HepG2 (cell line): ENCODE measurements at regions of chr4 and their contacts with region 1.

Region 1: DNA sequence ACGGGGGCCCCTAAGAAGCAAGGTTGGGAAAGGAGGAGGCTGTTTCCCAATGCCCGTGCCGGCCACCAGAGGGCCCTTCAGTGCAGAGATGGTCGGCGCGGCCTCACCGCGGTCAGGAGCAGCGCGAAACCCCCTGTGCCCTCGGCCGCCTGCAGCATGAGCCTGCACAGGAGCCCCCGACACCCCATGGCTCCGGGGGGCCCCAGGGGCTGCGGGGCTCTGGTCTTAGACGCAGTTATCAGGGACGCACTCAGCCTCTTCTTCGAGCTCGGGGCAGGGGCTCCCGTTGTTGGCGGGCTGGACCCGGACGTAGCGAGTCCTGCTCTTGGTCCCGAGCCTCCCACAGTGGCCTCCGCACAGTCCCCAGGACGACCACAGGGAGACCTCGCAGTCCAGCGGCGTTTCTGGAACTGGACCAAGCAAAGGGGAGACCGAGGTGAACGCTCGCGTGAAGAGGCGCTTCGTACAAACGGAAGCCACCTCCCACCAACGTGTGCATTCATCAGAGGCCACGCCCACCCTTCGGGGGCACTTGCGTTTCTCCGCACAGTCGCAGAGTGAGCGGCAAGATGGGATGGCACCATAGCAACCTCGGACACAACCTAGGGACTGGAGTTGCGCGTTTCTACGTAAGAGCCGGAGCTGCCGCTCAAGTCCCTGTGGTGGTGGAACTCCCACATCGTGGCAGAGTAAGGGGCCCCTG is 5.0 kb downstream of the SPON2 start:
- DNase-seq: peak; percentile 24
- ATAC-seq: peak; percentile 79
- H3K4me3 ChIP-seq: no peak overlapping the region
- H3K27ac ChIP-seq: no peak overlapping the region
- H3K4me1 ChIP-seq: peaks cover 11% of the 10 kb centered on the region; the same call in 1 of the 2 replicates
- H3K27me3 ChIP-seq: peaks cover 3 to 6% of the 10 kb centered on the region in 2 experiments; a peak in 3 of 5 replicates
- CTCF ChIP-seq: peak; percentile 89
- EP300 ChIP-seq: no peak
- POLR2A ChIP-seq: no peak
- RAD21 ChIP-seq: peak; percentile 80

Region 2: GRCh38 chr4:1092026-1092982 is 75.1 kb before region 1 on chr4:
- CTCF ChIA-PET with region 1: no interaction called
- POLR2A ChIA-PET with region 1: no interaction called
- in situ Hi-C with region 1: no loop called
- intact Hi-C with region 1: no loop called
- DNase-seq: no peak
- ATAC-seq: peak; percentile 75
- H3K4me3 ChIP-seq: no peak overlapping the region
- H3K27ac ChIP-seq: no peak overlapping the region
- H3K4me1 ChIP-seq: no peaks in the 10 kb centered on the region
- H3K27me3 ChIP-seq: peaks cover 7 to 31% of the 10 kb centered on the region in 2 experiments; a peak in 4 of 5 replicates
- CTCF ChIP-seq: peak; percentile 24; the same call in 1 of the 2 replicates
- EP300 ChIP-seq: no peak
- POLR2A ChIP-seq: no peak
- RAD21 ChIP-seq: no peak

Region 3: DNA sequence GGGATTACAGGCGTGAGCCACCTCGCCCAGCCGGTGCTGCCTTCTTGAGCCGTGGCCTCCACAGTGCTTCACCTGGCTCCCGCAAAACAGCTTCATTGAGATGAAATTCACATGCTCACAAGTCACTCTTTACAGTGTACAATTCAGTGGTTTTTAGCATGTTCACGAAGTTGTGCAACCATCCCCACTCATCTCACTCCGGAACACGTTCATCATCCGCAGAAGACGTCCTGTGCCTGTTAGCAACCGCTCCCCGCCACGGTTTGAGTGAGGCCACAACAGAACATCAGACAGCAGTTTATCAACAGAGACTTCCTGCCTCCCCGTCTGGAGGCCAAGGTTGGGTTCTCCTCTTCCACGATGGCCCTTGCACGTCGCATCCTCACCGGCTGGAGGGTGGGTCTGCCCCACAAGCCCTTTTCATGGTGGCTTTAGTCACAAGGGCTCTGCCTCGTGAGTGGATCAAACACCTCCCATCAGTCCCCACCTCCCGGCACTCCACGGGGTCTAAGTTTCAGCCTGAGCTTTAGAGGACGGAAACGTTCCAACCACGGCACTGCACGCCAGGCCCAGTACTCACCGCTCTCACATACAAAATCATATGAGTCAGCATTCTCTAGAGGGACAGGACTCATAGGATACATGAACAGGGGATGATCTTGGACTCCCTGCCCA is 34.6 kb after region 1 on chr4:
- CTCF ChIA-PET with region 1: no interaction called
- POLR2A ChIA-PET with region 1: interaction called, 95 read pairs
- in situ Hi-C with region 1: loop called (anchors 5 kb)
- intact Hi-C with region 1: no loop called
- DNase-seq: no peak
- ATAC-seq: no peak
- H3K4me3 ChIP-seq: no peak overlapping the region
- H3K27ac ChIP-seq: no peak overlapping the region
- H3K4me1 ChIP-seq: peaks cover 35% of the 10 kb centered on the region
- H3K27me3 ChIP-seq: no peaks in the 10 kb centered on the region
- CTCF ChIP-seq: no peak
- EP300 ChIP-seq: no peak
- POLR2A ChIP-seq: no peak
- RAD21 ChIP-seq: no peak

Region 4: DNA sequence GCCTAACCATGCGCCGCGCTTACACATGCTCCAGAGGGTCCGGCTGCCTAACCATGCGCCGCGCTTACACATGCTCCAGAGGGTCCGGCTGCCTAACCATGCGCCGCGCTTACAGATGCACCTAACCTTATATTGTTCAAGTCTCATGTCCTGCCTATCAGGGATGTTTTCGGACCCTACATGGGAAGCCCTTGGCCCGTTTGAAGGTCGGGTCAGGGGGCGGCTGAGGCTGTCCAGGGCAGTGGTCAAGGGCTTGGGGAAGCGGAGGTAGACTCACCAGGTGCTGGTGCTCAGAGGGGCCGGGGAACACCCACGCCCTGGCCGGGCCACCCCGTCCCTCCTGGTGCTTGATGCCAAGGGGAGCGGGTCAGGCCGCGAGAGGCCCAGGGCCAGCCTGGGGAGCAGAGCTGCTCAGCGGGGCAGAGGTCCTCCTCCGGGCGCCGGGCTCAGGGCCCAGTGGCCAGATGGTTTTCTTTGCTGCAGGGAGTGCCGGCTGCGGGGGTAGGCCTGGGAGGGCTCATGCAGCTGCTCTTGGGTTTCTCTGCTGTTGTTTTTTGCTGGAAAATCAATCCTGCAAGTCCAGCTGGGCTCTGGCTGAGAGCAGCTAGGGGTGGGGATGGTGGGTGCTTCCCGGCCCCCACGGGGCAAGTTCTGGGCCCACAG is 40.3 kb after region 1 on chr4:
- CTCF ChIA-PET with region 1: no interaction called
- POLR2A ChIA-PET with region 1: interaction called, 95 read pairs
- in situ Hi-C with region 1: loop called (anchors 5 kb)
- intact Hi-C with region 1: no loop called
- DNase-seq: no peak
- ATAC-seq: peak; percentile 10
- H3K4me3 ChIP-seq: no peak overlapping the region
- H3K27ac ChIP-seq: no peak overlapping the region
- H3K4me1 ChIP-seq: peaks cover 45% of the 10 kb centered on the region
- H3K27me3 ChIP-seq: no peaks in the 10 kb centered on the region
- CTCF ChIP-seq: no peak
- EP300 ChIP-seq: no peak
- POLR2A ChIP-seq: no peak
- RAD21 ChIP-seq: no peak

Region 5: GRCh38 chr4:1249148-1249730 is 81.8 kb after region 1 on chr4:
- CTCF ChIA-PET with region 1: no interaction called
- POLR2A ChIA-PET with region 1: interaction called, 32 read pairs
- in situ Hi-C with region 1: no loop called
- intact Hi-C with region 1: loop called (anchors 2 kb)
- DNase-seq: peak; percentile 56
- ATAC-seq: peak; percentile 47
- H3K4me3 ChIP-seq: peak overlapping the region; percentile 68 to 78 (median 76)
- H3K27ac ChIP-seq: peak overlapping the region; percentile 84
- H3K4me1 ChIP-seq: peaks cover 64% of the 10 kb centered on the region
- H3K27me3 ChIP-seq: no peaks in the 10 kb centered on the region
- CTCF ChIP-seq: peak; percentile 9; the same call in 1 of the 2 replicates
- EP300 ChIP-seq: no peak
- POLR2A ChIP-seq: peak in 1 of 2 experiments; percentile 54; a peak in 2 of 4 replicates
- RAD21 ChIP-seq: peak; percentile 46; the same call in 1 of the 2 replicates

Region 6: DNA sequence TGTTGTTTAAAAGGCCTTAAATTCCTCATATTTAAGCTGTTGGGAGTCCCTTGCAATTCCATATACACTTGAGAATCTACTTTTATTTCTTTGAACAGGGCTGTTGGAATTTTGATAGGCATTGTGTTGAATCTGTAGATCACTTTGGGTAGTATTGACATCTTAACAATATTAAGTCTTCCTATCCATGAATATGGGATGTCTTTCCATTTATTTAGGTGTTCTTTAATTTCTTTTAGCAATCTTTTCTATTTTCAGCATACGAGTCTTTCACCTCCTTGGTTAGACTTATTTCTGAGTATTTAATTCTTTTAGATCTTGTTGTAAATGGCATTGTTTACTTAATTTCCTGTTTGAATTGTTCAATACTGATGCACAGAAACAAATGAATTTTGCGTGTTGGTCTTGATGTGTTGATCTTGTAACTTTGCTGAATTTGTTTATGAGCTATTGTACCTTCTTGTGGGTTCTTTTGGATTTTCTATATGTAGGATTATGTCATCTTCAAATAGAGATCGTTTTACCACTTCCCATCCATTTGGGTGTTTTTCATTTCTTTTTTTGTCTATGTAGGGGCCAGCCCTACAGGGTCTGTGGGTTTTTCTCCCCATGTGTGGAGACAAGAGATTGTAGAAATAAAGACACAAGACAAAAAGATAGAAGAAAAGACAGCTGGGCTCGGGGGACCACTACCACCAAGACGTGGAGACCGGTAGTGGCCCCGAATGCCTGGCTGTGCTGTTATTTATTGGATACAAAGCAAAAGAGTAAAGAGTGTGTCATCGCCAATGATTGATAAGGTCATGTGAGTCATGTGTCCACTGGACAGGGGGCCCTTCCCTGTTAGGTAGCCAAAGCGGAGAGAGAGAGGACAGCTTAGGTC is 99.7 kb after region 1 on chr4:
- CTCF ChIA-PET with region 1: interaction called, 4 read pairs
- POLR2A ChIA-PET with region 1: interaction called, 4 read pairs
- in situ Hi-C with region 1: no loop called
- intact Hi-C with region 1: loop called (anchors 1 kb)
- DNase-seq: no peak
- ATAC-seq: no peak
- H3K4me3 ChIP-seq: no peak overlapping the region
- H3K27ac ChIP-seq: no peak overlapping the region
- H3K4me1 ChIP-seq: no peaks in the 10 kb centered on the region
- H3K27me3 ChIP-seq: no peaks in the 10 kb centered on the region; a peak in 1 of 5 replicates
- CTCF ChIP-seq: no peak
- EP300 ChIP-seq: no peak
- POLR2A ChIP-seq: no peak
- RAD21 ChIP-seq: no peak

Region 7: DNA sequence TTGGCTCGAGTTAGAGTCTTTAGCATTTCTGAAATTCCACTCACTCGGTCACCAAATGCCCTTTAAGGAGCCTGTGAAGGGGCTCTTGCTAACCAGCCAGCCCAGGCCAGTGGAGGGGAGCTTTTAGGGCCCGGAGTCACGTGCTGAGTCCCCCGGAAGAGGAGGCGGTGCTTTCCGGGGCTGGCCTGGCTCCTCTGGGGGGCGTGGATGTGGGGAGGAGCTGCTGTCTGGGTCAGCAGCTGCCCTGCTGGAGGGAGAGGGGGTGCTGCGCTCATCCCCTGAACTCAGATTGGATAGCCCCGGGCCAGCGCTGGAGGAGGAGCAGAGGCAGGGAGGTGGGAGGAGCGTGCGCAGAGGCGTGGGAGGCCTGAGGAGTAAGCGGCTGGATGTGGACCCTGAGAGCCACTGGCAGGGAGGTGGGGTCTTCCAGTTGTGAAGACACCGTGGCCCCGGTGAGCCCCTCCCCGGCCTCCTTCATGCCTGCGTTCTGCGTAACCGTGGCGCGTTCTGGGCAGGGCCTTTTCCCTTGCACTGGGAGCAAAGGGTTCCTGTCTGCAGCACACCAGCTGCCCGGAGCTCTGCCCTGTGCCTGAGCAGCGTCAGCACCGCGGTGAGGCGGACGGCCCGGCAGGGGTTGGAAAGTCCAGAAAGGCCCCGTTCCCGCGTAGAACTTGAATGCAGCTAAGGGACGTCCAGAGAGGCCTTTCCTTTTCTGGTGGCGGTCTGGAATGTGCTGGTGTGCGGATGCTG is 142.0 kb after region 1 on chr4:
- CTCF ChIA-PET with region 1: no interaction called
- POLR2A ChIA-PET with region 1: interaction called, 11 read pairs
- in situ Hi-C with region 1: no loop called
- intact Hi-C with region 1: no loop called
- DNase-seq: peak; percentile 91
- ATAC-seq: peak; percentile 95
- H3K4me3 ChIP-seq: peak overlapping the region; percentile 57 to 78 (median 73); a peak in 5 of 6 replicates
- H3K27ac ChIP-seq: peak overlapping the region; percentile 75
- H3K4me1 ChIP-seq: peaks cover 72% of the 10 kb centered on the region
- H3K27me3 ChIP-seq: no peaks in the 10 kb centered on the region
- CTCF ChIP-seq: no peak
- EP300 ChIP-seq: no peak
- POLR2A ChIP-seq: peak in 1 of 2 experiments; percentile 33; a peak in 1 of 4 replicates
- RAD21 ChIP-seq: peak; percentile 36; the same call in 1 of the 2 replicates